Naive thymus-derived CD8-positive, alpha-beta T cell (primary cell): ENCODE measurements at regions of chr16 and their contacts with region 1.

Region 1: DNA sequence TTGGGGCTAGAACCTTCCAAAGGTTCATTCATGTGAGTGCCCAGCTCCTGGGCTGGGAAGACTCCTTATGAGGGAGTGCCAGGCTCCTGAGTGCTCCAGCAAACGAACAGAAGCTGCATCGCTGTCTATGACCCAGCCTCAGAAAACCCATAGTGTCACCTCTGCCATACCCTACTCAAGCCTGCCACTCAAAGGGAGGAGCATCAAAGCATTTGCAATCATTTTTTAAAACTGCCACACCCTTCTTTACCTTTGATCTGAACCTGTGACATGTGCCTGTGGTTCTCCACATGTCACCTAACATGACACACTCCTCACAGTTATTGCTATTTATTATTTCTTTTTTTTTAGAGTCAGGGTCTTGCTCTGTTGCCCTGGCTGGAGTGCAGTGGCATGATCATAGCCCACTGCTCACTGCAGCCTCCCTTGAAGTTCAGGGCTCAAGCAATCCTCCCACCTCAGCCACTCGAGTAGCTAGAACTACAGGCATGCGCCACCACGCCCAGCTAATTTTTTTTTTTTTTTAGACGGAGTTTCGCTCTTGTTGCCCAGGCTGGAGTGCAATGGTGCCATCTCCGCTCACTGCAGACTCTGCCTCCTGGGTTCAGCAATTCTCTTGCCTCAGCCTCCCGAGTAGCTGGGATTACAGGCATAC is 7.3 kb upstream of the KDM8 start:
- DNase-seq: peak in 9 of 10 donors; percentile 16 to 90 (median 75)
- ATAC-seq: peak; percentile 89 to 94
- H3K4me3 Mint-ChIP-seq: peak overlapping the region; percentile 52 to 89 (median 77)
- H3K27ac Mint-ChIP-seq: peak overlapping the region; percentile 92 to 99 (median 98)
- H3K4me1 Mint-ChIP-seq: peaks cover 35 to 79% (median 71%) of the 10 kb centered on the region in 4 donors
- H3K27me3 Mint-ChIP-seq: no peaks in the 10 kb centered on the region

Region 2: GRCh38 chr16:27154705-27155521 is 41.2 kb before region 1 on chr16:
- POLR2A ChIA-PET with region 1: no interaction called
- DNase-seq: peak; percentile 27 to 79 (median 63)
- ATAC-seq: peak; percentile 63 to 73
- H3K4me3 Mint-ChIP-seq: no peak overlapping the region
- H3K27ac Mint-ChIP-seq: peak overlapping the region in 7 of 10 donors; percentile 20 to 92 (median 73)
- H3K4me1 Mint-ChIP-seq: peaks cover 10 to 21% (median 15%) of the 10 kb centered on the region in 4 donors
- H3K27me3 Mint-ChIP-seq: no peaks in the 10 kb centered on the region

Region 3: DNA sequence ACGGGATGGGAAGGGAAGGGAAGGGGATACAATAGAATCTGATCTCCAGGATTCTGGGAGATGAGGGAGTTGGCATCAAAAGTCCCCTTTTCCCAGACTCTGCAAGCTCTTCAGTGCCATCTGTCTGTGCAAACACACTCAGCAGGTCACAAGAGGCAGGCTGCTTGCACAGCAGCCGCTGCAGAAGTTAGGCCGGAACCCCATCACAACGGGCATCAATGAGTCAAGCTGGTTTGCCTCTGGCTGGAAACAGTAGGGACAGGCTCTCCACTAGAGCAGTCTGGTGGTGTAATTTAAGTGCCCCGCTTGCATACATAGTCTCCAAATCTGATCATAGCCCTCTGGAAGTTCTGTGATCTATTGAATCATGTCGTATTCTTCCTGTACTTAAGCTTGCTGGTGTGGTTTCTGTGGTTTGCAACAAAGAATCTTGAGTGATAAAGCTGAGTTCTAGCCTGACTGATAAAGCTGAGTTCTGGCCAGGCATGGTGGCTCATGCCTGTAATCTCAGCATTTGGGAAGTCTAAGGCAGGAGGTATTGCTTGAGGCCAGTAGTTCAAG is 26.5 kb before region 1 on chr16:
- POLR2A ChIA-PET with region 1: interaction called, 13 read pairs
- DNase-seq: peak; percentile 34 to 91 (median 82)
- ATAC-seq: peak; percentile 92
- H3K4me3 Mint-ChIP-seq: peak overlapping the region; percentile 48 to 80 (median 68)
- H3K27ac Mint-ChIP-seq: peak overlapping the region; percentile 70 to 98 (median 96)
- H3K4me1 Mint-ChIP-seq: peaks cover 26 to 73% (median 67%) of the 10 kb centered on the region in 4 donors
- H3K27me3 Mint-ChIP-seq: no peaks in the 10 kb centered on the region

Region 4: DNA sequence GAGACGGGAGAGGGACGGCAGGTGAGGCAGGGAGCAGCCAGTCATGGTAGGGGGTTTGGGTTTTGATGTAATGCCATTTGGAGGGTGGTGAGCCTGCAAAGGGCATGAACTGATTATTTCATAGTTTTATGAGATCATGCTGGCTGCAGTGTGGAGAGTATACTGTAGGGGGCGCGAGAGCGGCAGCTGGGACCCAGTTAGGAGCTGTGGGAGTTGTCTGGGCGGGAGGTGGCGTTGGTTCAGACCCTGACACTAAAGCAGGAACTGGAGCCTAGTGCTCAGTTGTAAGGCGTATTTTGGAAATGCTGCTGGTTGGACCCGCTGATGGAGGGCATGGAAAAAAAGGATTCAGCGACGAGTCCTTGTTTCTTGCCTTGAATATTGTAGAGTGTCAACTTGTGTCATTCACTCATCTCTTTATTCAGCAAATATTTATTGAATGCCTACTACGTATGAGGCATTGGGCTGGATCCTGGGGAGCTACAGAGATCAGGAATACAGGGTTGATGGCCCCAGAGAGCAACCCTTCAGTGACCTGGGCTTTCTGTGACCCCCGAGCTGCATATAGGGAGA is 16.5 kb before region 1 on chr16:
- POLR2A ChIA-PET with region 1: interaction called, 35 read pairs
- DNase-seq: peak; percentile 76 to 93 (median 86)
- ATAC-seq: peak; percentile 98 to 99
- H3K4me3 Mint-ChIP-seq: peak overlapping the region in 6 of 10 donors; percentile 0 to 30 (median 3)
- H3K27ac Mint-ChIP-seq: peak overlapping the region; percentile 53 to 92 (median 83)
- H3K4me1 Mint-ChIP-seq: peaks cover 23 to 40% (median 36%) of the 10 kb centered on the region in 4 donors
- H3K27me3 Mint-ChIP-seq: no peaks in the 10 kb centered on the region